ENCODE measurements at regions of chr1 and their contacts with region 1.

Region 1: DNA sequence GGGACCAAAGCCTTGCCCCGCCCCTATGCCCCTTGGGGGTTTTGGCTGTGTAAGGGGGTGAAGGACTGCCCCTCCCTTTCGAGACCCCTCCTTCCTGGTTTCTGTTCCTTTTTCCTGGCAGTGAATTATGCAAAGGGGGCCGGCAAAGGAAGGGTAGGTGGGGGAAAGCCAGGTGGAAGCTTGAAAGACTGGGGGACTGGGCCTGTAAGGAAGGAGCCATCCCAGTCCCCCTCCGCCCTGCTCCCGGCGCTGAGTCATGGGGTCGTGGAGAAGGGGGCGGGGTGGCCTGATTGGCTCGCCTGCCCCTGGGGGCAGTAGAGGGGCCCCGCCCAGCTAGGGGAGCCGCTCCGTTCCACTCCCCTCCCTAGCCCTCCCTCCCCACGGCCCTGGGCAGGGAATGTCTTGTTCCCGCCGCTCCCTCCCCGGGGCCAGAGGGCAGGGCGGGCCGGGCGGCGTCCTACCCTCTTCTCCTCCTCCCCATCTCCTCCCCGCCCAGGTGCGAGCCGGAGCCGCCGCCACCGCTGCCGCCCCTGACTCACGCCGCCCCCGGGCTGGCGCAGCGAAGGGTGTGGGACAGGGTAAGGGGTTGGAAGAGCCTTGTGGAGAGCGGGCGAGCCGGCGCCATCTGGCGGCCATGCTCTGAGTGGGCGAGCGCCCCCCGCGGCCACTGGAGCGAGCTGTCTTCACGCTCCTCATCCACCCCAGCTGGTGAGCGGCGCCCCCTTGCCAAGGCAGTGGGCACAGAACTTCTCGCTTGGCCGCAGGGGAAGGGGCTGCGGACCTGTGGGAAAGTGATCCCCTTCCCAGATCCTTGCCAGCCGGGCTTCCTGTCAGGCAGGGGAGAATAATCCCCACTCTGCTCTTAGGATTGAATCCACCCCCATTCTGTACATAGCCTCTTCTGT is 14.7 kb downstream of the ZBTB7B start:
- DNase-seq: peak; percentile 94

Region 2: GRCh38 chr1:154961497-154962262 is 55.6 kb before region 1 on chr1 and contains the start of gene PYGO2:
- intact Hi-C with region 1: loop called (anchors 1 kb)
- DNase-seq: peak; percentile 94
- total RNA-seq, gene PYGO2: 16.9 TPM

Region 3: DNA sequence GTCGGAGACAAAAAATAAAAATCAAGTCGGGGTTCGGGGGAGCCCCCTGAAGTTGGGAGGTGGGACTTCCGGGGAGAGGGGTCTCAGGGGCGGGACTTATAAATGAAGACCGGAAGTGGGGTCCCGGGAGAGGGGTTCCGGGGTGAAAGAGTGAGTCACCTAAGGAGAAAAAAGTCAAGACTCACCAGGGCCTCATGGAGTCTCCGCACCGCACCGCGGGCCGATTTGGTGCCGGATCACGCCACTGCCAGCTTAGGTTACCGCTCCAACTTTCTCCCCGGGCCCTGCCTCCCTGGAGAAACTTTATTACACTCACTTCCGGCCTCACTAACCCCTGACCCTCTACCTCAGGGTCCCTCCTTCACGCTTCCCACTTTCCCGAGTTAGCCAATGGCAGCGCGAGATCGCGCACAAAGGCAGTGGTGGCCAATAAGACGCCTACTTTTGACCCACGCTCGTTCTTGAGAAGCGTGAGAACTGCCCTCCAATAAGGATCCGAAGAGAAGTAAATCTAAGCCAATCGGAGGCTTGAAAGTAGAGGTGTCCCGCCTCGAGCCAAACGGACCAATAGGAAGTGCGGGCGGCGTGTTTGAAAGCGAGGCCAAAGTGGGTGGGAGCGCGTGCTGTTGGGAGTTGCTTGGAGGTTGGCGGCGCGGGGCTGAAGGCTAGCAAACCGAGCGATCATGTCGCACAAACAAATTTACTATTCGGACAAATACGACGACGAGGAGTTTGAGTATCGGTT is 43.1 kb before region 1 on chr1 and contains the start of gene CKS1B:
- intact Hi-C with region 1: loop called (anchors 2 kb)
- DNase-seq: peak; percentile 97
- total RNA-seq, gene CKS1B: 16.0 TPM

Region 4: GRCh38 chr1:155001675-155002463 is 15.4 kb before region 1 on chr1:
- intact Hi-C with region 1: loop called (anchors 2 kb)
- DNase-seq: peak; percentile 100

Region 5: DNA sequence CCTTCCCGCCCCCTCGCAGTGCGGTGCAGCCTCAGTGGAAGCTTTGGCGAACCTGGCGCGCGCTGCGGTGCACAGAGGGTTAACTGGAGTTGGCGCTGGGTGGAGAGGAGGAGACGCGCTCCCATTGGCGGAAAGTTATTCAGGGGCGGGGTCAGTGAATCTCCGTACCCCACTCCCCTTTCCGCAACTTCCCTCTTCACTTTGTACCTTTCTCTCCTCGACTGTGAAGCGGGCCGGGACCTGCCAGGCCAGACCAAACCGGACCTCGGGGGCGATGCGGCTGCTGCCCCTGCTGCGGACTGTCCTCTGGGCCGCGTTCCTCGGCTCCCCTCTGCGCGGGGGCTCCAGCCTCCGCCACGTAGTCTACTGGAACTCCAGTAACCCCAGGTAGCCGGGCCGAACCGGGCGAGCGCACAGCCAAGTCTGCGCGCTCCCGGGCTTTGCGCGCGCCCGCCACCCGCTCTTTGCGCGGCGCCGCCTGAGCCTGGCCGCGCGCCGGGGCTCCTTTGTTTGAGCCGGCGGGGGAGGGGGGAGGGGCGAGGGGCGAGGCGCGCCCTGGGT is 46.3 kb after region 1 on chr1 and contains the start of gene EFNA4:
- intact Hi-C with region 1: loop called (anchors 5 kb)
- DNase-seq: peak; percentile 94
- total RNA-seq, gene EFNA4: 1.9 TPM